Right ventricle myocardium inferior (tissue), 1 donor: ENCODE measurements at regions of chr5 and their contacts with region 1.

Region 1: GRCh38 chr5:174793684-174794328 is 69.4 kb downstream of the MSX2 start:
- DNase-seq: peak; percentile 67
- ATAC-seq: peak; percentile 50

Region 2: GRCh38 chr5:174327317-174328236 is 466.2 kb before region 1 on chr5:
- intact Hi-C with region 1: loop called (anchors 5 kb)
- DNase-seq: peak; percentile 80
- ATAC-seq: peak; percentile 42

Region 3: GRCh38 chr5:174571662-174572397 is 222.0 kb before region 1 on chr5:
- intact Hi-C with region 1: loop called (anchors 10 kb)
- DNase-seq: no peak
- ATAC-seq: peak; percentile 92

Region 4: DNA sequence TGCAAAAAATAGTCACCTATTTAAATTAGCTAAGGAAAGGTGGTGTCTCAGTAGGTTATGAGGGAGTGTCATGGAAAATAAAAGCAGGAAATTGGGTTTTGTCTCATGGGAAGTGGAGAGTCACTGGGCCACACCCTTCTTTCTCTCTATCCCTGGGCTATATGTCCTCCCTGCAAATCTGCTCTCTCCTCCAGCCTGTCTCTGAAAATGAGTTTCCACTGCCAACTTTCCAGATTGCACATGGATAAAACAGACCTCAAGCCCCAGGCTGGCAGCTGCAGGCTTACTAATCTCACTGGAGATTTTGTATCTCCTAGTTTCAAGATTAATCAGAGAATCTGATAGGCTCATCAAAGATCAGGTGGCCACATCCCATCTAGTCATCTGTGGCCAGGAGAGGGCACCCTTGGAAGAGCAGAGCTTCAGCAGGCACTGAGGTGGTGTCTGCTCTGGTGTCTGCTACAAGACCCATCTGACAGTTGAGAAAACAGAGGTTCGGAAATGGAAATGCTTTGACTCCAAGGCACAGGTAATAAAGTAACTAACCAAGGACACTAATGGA is 109.4 kb after region 1 on chr5:
- intact Hi-C with region 1: no loop called
- DNase-seq: no peak
- ATAC-seq: no peak